Activated naive CD4-positive, alpha-beta T cell treated with anti-CD3 and anti-CD28 coated beads for 36 hours (primary cell): ENCODE measurements at regions of chr1 and their contacts with region 1.

Region 1: DNA sequence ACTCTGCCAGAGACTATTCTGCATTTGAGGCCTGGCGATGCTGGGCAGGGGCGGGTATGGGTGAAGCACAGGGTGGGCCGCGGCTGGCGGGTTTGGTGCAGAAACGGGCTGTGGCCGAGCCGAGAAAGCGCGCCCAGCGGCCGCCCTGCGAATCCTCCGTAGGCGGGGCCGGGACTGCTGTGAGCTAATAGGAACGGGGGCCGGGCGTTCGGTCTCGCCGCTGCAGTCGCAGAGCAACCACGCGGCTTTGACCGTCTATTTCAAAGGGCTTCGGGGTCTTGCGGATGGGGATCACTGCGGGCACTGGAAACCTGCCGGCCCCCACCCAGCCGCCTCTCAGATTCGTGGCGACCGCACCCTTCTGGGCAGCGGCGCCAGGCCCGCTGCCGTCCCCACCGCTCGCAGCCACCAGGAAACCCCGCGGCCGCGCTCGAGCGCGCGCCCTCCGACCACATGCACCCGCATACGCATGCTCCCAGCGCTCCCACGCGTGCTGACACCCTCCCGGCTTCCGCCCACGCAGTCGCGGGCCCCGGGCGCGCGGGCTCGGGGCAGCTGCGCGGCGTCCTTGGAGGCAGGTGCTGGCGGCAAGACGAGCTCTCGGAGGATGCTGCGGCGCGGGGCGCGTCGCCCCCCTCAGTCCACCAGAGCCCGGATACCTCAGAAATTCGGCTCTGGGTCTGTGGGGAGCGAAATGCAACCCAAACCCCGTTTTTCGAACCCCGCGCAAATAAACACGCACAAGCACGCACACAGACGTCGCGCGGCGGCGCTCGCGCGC is 32.6 kb downstream of the DNTTIP2 start:
- DNase-seq: peak; percentile 75
- H3K4me3 Mint-ChIP-seq: peak overlapping the region; percentile 87
- H3K27ac Mint-ChIP-seq: peak overlapping the region; percentile 92
- H3K4me1 Mint-ChIP-seq: peaks cover 21% of the 10 kb centered on the region
- H3K27me3 Mint-ChIP-seq: no peaks in the 10 kb centered on the region

Region 2: GRCh38 chr1:92485381-92486257 is 1360.8 kb before region 1 on chr1:
- CTCF ChIA-PET with region 1: no interaction called
- intact Hi-C with region 1: loop called (anchors 10 kb)
- DNase-seq: peak; percentile 91
- H3K4me3 Mint-ChIP-seq: peak overlapping the region; percentile 90
- H3K27ac Mint-ChIP-seq: peak overlapping the region; percentile 93
- H3K4me1 Mint-ChIP-seq: peaks cover 38% of the 10 kb centered on the region
- H3K27me3 Mint-ChIP-seq: no peaks in the 10 kb centered on the region

Region 3: DNA sequence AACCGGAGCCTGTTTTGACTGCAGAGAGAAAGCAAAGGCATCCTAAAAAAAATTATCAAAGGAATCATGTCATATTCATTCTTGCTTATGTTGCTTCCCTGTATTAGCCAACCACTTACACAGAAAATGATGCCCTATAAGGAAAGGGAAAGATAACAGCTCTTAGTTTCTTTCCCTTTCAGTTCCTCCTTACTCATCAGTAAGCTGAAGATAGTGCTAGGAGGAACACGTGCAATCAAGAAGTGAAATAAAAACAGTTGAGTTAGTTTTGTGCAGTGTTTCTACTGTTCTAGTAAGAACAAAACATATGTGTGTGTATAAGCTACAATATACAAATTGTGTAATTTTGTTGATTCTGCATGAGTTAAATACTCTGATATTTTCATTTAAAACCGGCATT is 812.6 kb before region 1 on chr1:
- CTCF ChIA-PET with region 1: no interaction called
- intact Hi-C with region 1: loop called (anchors 5 kb)
- DNase-seq: no peak
- H3K4me3 Mint-ChIP-seq: no peak overlapping the region
- H3K27ac Mint-ChIP-seq: no peak overlapping the region
- H3K4me1 Mint-ChIP-seq: peaks cover 29% of the 10 kb centered on the region
- H3K27me3 Mint-ChIP-seq: no peaks in the 10 kb centered on the region

Region 4: DNA sequence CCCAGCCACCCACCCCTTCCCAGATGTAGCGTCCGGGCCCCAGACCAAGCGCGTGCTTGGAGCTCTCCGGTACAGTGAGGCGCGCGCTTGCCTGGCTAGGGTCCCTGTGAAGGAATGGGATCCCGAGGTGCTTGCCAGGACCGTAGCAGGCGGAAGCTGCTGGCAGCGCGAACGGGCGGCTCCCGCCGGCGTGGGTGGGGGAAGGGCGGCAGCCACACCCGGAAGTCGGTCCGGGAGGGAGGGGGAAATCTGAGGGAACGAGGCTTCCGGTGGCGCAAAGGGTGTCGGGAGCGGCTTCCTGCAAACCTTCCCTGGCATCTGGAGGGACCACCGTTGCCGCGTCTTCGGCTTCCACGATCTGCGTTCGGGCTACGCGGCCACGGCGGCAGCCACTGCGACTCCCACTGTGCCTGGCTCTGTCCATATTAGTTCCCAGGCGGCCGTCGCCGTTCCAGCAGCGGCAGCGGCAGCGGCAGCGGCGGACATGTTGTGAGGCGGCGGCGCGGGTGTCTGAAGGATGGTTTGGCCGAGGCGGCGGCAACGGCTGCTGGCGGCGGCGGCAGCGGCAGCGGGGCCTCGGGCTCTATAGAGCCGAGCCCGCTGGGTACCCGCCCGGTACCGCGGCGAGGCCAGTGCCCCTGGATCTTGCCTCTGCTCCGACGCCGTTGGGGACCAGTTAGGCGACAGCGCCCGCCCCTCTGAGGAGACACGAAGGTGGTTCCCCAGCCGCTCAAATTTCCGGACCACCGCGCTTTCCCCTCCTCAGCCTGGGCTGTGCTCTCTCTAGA is 500.6 kb before region 1 on chr1 and contains the start of gene DR1:
- CTCF ChIA-PET with region 1: no interaction called
- intact Hi-C with region 1: loop called (anchors 1 kb)
- DNase-seq: peak; percentile 95
- H3K4me3 Mint-ChIP-seq: peak within 1 kb of the TSS; percentile 83
- H3K27ac Mint-ChIP-seq: peak within 1 kb of the TSS; percentile 96
- H3K4me1 Mint-ChIP-seq: peaks cover 25% of the 10 kb centered on the region
- H3K27me3 Mint-ChIP-seq: no peaks in the 10 kb centered on the region
- total RNA-seq, gene DR1: 76.3 to 80.3 TPM

Region 5: DNA sequence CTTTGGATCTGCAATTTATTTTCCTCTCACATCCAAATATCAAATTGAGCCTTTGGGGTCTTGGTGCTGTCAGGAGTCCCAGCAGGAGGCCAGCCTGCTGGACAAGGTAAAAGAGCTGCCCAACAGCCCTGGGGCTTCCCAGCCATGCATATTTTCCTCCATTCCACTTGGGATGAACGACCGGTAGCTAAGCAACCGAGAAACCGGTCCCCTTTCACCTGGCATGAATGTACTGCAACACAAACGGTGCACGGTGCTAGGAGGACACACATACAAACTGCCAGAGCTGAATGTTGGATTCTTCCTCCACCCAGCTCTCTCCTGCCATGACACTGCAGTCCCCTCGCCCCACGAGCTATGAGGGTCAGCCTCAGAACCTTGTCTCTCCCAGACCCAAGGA is 207.4 kb before region 1 on chr1:
- CTCF ChIA-PET with region 1: interaction called, 101 read pairs
- intact Hi-C with region 1: no loop called
- DNase-seq: no peak
- H3K4me3 Mint-ChIP-seq: no peak overlapping the region
- H3K27ac Mint-ChIP-seq: no peak overlapping the region
- H3K4me1 Mint-ChIP-seq: peaks cover 6% of the 10 kb centered on the region
- H3K27me3 Mint-ChIP-seq: no peaks in the 10 kb centered on the region

Region 6: GRCh38 chr1:93827128-93827527 is 19.3 kb before region 1 on chr1:
- CTCF ChIA-PET with region 1: interaction called, 6 read pairs
- intact Hi-C with region 1: loop called (anchors 1 kb)
- DNase-seq: no peak
- H3K4me3 Mint-ChIP-seq: no peak overlapping the region
- H3K27ac Mint-ChIP-seq: no peak overlapping the region
- H3K4me1 Mint-ChIP-seq: peaks cover 3% of the 10 kb centered on the region
- H3K27me3 Mint-ChIP-seq: no peaks in the 10 kb centered on the region

Region 7: DNA sequence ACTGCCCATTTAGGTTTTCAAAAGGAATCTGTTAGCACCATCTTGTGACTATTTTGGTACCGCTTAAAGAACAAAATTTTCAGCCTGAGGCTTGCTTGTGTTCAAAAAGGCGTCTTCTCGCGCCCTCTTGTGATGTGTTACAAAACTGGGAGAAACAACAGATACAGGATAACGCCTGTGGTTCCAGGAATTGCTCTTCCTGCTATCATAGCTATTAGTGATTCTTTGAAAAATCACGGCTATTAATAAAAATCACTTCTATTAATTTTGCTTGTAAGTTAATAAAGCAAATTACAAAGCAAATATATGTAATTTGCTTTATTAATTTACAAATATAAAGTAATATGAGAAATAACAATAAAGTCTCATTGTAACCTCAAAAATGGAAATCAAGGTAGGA is 489.5 kb after region 1 on chr1:
- CTCF ChIA-PET with region 1: no interaction called
- intact Hi-C with region 1: loop called (anchors 5 kb)
- DNase-seq: peak; percentile 67
- H3K4me3 Mint-ChIP-seq: no peak overlapping the region
- H3K27ac Mint-ChIP-seq: no peak overlapping the region
- H3K4me1 Mint-ChIP-seq: no peaks in the 10 kb centered on the region
- H3K27me3 Mint-ChIP-seq: peaks cover 4% of the 10 kb centered on the region